ENCODE measurements at regions of chr3 and their contacts with region 1.

Region 1: GRCh38 chr3:4712143-4712542 is 219.0 kb downstream of the ITPR1 start:
- DNase-seq: no peak
- CTCF ChIP-seq: no peak

Region 2: GRCh38 chr3:4021162-4021561 is 691.0 kb before region 1 on chr3:
- CTCF ChIA-PET with region 1: no interaction called
- POLR2A ChIA-PET with region 1: no interaction called
- DNase-seq: no peak
- CTCF ChIP-seq: no peak

Region 3: GRCh38 chr3:4729061-4729973 is 17.2 kb after region 1 on chr3:
- CTCF ChIA-PET with region 1: interaction called, 29 read pairs
- POLR2A ChIA-PET with region 1: no interaction called
- DNase-seq: no peak
- CTCF ChIP-seq: no peak

Region 4: DNA sequence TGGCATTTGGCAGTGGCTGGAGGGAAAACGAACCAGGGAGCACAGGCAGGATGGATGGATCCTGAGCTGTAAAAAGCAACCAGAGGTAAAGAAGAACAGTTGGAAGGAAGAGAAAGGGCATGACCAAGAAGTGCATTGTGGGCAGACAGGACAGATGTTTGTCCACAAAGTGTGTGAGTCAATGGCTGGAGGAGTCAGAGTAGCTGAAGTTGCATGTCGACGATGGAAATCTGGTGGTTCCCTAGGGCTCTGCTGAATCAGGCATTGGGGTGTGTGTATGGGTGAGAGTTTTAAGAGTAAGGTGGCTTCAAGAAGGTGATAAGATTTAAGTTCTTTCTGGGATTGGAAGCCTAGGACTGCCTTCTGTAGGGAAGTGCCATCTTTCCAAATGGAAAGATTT is 53.1 kb after region 1 on chr3:
- CTCF ChIA-PET with region 1: interaction called, 13 read pairs
- POLR2A ChIA-PET with region 1: no interaction called
- DNase-seq: no peak
- CTCF ChIP-seq: no peak

Region 5: GRCh38 chr3:4834403-4834866 is 122.3 kb after region 1 on chr3:
- CTCF ChIA-PET with region 1: interaction called, 21 read pairs
- POLR2A ChIA-PET with region 1: no interaction called
- DNase-seq: peak; percentile 61
- CTCF ChIP-seq: no peak

Region 6: GRCh38 chr3:5006755-5007202 is 294.6 kb after region 1 on chr3:
- CTCF ChIA-PET with region 1: interaction called, 11 read pairs
- POLR2A ChIA-PET with region 1: no interaction called
- DNase-seq: peak; percentile 84
- CTCF ChIP-seq: peak; percentile 11

Region 7: DNA sequence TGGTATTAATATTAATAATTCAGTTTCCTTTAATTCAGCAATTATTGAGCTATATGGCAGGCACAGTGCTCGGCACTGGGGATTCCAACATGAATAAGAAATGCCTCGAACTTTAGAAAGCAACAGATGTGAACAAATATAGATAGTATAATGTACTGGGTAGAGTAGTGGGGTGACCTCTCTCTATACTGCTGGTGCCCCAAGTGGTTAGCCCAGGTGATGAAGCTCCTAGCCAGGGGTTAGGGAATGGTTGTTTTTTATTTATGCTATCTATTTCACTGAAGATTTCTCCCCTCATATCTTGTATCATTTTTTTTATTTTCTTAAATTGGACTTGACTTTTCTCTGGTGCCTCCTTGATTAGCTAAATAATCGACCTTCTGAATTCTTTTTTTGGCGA is 329.2 kb after region 1 on chr3:
- CTCF ChIA-PET with region 1: interaction called, 19 read pairs
- POLR2A ChIA-PET with region 1: no interaction called
- DNase-seq: no peak
- CTCF ChIP-seq: no peak

Region 8: GRCh38 chr3:5411786-5412185 is 699.6 kb after region 1 on chr3:
- CTCF ChIA-PET with region 1: no interaction called
- POLR2A ChIA-PET with region 1: no interaction called
- DNase-seq: no peak
- CTCF ChIP-seq: no peak

Measured in GM10248 (cell line).